Dorsolateral prefrontal cortex (tissue), 120 donors: ENCODE measurements at regions of chr12 and their contacts with region 1.

Region 1: DNA sequence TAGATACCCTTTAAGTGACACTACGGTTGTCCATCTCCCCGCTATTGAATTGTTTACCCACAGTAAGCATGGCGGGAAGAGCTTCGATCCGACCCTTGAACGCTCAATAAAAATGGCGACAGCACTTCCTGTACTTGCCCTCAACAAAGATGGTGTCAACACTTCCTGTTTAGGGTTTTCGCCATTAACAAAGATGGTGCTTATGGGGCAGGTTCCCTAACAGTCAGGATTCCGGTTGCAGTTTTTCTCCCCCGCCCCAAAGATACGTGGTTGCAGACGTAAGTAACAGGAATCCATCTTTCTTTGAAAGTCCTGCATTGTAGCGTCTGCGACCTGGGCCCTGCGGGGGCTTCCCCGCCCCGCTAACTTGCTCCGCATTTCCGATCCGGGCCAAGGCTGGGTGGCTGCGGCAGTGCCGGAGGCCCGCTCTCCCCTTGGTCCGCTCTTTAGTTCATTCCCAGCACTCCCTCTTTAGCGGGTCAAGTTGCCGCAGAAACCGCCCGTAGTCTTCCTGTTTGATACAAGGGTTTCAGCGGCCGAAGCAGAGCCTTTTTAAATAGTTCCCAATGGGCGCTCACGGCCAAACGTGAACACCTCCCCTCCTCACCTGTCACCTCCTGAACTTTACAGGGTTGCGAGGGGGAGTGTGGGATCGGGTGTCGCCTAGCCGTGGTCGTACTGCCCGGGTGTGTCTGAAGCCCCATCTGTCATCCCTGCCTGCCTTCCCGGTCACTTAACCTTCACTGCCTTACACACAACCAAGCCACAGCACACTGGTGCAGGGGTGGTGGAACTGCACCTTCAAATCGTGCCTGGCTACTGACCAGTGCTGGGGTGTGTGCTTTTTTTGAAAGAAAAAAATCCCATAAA is at the start of gene CRADD:
- DNase-seq: peak; percentile 39 to 91 (median 76)
- H3K4me3 ChIP-seq: peak within 1 kb of the TSS; percentile 58 to 96 (median 80)
- H3K27ac ChIP-seq: peak within 1 kb of the TSS; percentile 78 to 100 (median 96)
- H3K27me3 ChIP-seq: peaks cover 0 to 5% (median 0%) of the 10 kb centered on the region in 45 donors
- CTCF ChIP-seq: peak in 33 of 56 donors; percentile 8 to 61 (median 27)
- total RNA-seq, gene CRADD: 12.3 to 35.5 (median 22.5) TPM

Region 2: DNA sequence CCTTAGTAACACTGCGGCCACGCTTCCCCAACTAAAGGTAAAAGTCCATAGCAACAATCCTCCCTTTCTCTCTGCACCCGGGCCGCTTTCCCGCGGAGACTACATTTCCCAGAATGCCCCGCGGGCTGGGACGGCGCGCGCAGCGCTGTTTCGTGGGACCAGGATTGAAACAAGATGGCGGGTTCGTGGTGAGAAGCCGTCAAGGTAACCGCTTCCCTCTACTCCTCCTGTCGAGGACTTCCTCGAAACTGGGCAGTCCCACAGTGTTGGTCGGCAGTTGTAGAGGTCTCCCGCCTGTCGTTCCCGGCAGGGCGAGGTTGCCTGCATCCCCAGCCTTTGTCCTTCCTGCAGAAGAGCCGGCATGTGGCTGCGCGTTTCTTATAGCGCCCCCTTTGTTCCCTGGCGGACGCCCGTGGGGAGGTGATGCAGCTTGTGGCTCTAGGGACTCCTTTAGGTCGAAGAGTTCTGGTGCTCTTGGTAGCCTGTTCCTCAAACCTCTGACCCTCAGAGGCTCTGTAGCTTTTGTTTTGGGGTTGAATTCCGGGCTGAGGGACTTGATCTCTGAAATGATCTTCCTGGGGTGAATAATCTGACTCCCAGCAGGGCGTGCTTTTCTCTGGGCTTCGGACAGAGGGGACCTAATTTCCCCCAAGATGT is 210.0 kb before region 1 on chr12 and contains the start of gene MRPL42:
- intact Hi-C with region 1: loop called in 1 of 2 experiments (anchors 10 kb)
- DNase-seq: peak; percentile 81 to 94 (median 86)
- H3K4me3 ChIP-seq: peak within 1 kb of the TSS; percentile 65 to 96 (median 87)
- H3K27ac ChIP-seq: peak within 1 kb of the TSS; percentile 45 to 96 (median 87)
- H3K27me3 ChIP-seq: no peaks in the 10 kb centered on the region
- CTCF ChIP-seq: peak; percentile 44 to 94 (median 77)
- total RNA-seq, gene MRPL42: 26.4 to 78.8 (median 56.2) TPM

Region 3: DNA sequence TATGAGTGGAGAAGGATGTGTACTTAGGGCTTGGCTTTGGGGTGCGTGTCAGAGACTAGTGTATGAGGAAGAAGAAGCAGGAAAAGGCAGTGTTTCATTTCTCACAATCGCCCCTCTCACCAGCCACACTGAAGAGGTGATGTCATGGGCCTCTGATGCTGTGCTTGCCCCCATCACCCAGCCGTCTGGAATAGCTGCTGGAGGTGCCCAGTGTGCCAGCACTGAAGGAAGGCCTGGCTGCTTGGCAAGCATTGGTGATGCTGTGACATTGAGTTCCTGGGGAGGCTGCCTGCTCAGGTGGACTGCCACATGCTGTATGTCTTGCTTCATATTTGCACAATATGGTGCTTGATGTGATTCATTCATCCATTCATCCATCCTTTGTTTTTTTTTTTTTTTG is 55.9 kb after region 1 on chr12:
- intact Hi-C with region 1: loop called in 1 of 2 experiments (anchors 10 kb)
- DNase-seq: peak in 1 of 10 donors; percentile 71
- H3K4me3 ChIP-seq: no peak overlapping the region
- H3K27ac ChIP-seq: no peak overlapping the region
- H3K27me3 ChIP-seq: no peaks in the 10 kb centered on the region
- CTCF ChIP-seq: no peak

Region 4: GRCh38 chr12:93790472-93791152 is 113.2 kb after region 1 on chr12:
- intact Hi-C with region 1: no loop called
- DNase-seq: no peak
- H3K4me3 ChIP-seq: no peak overlapping the region
- H3K27ac ChIP-seq: no peak overlapping the region
- H3K27me3 ChIP-seq: no peaks in the 10 kb centered on the region
- CTCF ChIP-seq: no peak

Region 5: DNA sequence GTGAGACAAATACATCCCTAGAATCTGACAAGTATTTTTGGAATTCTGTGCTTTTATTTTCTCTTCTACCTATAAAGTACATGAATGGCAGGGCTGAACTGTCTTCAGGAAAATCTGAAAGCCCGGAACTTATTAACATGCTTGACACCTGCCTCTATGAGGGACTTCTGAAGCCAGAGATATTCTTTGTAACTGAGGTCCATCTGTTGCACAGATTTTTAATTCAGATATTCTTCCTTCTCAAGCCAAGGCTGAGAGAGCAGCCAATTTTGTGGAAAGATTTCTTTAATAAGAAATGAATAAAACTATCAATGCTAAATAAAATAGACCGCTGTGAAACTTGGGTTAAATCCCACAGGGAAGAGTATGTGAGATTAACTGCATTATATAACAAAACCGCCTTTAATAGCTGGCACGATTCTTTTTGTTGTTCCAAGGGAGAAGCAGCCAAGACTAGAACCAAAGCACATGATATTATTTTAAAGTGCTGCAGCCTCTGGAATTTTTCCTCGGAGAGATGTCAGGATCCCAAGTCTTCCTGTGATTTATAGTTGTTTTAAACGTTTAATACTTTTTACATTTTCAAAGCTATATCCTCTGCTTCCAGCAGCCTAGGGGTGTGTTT is 148.6 kb after region 1 on chr12:
- intact Hi-C with region 1: loop called in 1 of 2 experiments (anchors 10 kb)
- DNase-seq: no peak
- H3K4me3 ChIP-seq: peak overlapping the region in 1 of 59 donors; percentile 1
- H3K27ac ChIP-seq: peak overlapping the region in 10 of 59 donors; percentile 0 to 57 (median 22)
- H3K27me3 ChIP-seq: no peaks in the 10 kb centered on the region
- CTCF ChIP-seq: no peak

Region 6: DNA sequence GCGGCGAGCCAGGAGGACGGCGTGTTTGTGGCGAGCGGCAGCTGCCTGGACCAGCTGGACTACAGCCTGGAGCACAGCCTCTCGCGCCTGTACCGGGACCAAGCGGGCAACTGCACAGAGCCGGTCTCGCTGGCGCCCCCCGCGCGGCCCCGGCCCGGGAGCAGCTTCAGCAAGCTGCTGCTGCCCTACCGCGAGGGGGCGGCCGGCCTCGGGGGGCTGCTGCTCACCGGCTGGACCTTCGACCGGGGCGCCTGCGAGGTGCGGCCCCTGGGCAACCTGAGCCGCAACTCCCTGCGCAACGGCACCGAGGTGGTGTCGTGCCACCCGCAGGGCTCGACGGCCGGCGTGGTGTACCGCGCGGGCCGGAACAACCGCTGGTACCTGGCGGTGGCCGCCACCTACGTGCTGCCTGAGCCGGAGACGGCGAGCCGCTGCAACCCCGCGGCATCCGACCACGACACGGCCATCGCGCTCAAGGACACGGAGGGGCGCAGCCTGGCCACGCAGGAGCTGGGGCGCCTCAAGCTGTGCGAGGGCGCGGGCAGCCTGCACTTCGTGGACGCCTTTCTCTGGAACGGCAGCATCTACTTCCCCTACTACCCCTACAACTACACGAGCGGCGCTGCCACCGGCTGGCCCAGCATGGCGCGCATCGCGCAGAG is 471.8 kb after region 1 on chr12:
- intact Hi-C with region 1: no loop called
- DNase-seq: peak in 6 of 10 donors; percentile 30 to 64 (median 52)
- H3K4me3 ChIP-seq: peak overlapping the region; percentile 45 to 79 (median 63)
- H3K27ac ChIP-seq: peak overlapping the region in 45 of 59 donors; percentile 4 to 89 (median 69)
- H3K27me3 ChIP-seq: peaks cover 0 to 23% (median 0%) of the 10 kb centered on the region in 45 donors
- CTCF ChIP-seq: peak in 30 of 56 donors; percentile 3 to 43 (median 18)

Region 7: DNA sequence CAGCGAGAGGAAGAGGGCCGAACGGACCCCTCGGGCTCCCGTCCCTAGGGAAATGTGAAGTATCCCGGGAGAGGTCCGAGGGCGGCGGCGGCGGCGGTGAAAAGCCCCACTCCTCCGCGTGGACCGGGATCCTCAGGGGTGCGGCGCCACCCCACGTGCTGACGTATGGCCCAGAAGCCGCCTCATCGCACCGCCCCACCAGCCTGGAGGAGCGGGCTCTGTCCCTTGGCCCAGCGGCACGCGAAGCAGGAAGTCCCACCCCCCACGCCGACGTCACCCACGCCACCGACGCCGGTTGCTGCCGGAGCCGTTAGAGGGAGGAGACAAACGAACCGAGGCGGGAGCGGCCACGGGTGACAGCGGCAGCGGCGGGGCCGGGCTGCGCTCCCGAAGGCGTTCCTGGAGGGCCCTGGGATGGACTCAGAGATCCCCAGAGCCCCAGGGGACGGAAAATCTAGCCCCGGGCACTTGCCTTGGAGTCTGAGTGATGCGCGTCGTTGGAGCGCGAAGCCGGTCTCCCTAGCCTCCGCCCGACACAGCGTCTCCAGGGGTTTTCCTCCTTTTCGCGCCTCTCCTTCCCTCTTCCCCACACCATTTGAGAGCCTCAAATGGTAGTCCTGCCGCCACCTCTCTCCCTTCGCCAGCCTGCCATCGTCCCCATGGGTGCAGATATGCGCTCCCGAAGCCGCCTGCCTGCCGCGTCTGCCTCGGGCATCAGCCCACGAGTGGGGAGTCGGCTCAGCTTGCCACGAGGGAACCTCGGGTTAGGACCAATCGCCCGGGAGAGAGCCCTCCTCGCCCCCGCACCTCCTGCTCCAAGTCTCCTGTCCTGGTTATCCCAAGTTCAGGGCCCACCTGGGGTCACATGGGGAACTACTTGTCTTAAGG is 782.5 kb after region 1 on chr12 and contains the start of gene CEP83:
- intact Hi-C with region 1: loop called in 1 of 2 experiments (anchors 5 kb)
- DNase-seq: peak; percentile 93 to 99 (median 96)
- H3K4me3 ChIP-seq: peak within 1 kb of the TSS; percentile 55 to 96 (median 87)
- H3K27ac ChIP-seq: peak within 1 kb of the TSS in 58 of 59 donors; percentile 9 to 92 (median 83)
- H3K27me3 ChIP-seq: no peaks in the 10 kb centered on the region
- CTCF ChIP-seq: peak in 30 of 56 donors; percentile 2 to 52 (median 22)
- total RNA-seq, gene CEP83: 10.1 to 25.9 (median 16.7) TPM